Mammary epithelial cell (primary cell): ENCODE measurements at regions of chr17 and their contacts with region 1.

Region 1: GRCh38 chr17:2592971-2593820 is at the start of gene PAFAH1B1:
- DNase-seq: peak; percentile 90
- H3K4me3 ChIP-seq: peak within 1 kb of the TSS; percentile 68 to 91 (median 86)
- H3K27ac ChIP-seq: peak within 1 kb of the TSS; percentile 91
- H3K4me1 ChIP-seq: peaks cover 5% of the 10 kb centered on the region
- H3K27me3 ChIP-seq: no peaks in the 10 kb centered on the region
- CTCF ChIP-seq: peak in 1 of 2 donors; percentile 8
- total RNA-seq, gene PAFAH1B1: 87.0 to 191 TPM

Region 2: GRCh38 chr17:2484876-2485275 is 108.3 kb before region 1 on chr17:
- CTCF ChIA-PET with region 1: interaction called, 3 read pairs
- dilution Hi-C with region 1: no loop called
- in situ Hi-C with region 1: no loop called
- intact Hi-C with region 1: loop called (anchors 10 kb)
- DNase-seq: peak; percentile 85
- H3K4me3 ChIP-seq: peak overlapping the region; percentile 13 to 35 (median 30)
- H3K27ac ChIP-seq: peak overlapping the region; percentile 43
- H3K4me1 ChIP-seq: peaks cover 20% of the 10 kb centered on the region
- H3K27me3 ChIP-seq: no peaks in the 10 kb centered on the region
- CTCF ChIP-seq: peak in 1 of 2 donors; percentile 10

Region 3: GRCh38 chr17:2511462-2512369 is 81.5 kb before region 1 on chr17 and contains the start of gene METTL16:
- CTCF ChIA-PET with region 1: no interaction called
- dilution Hi-C with region 1: no loop called
- in situ Hi-C with region 1: no loop called
- intact Hi-C with region 1: loop called (anchors 1 kb)
- DNase-seq: peak; percentile 98
- H3K4me3 ChIP-seq: peak within 1 kb of the TSS; percentile 78 to 94 (median 82)
- H3K27ac ChIP-seq: peak within 1 kb of the TSS; percentile 96
- H3K4me1 ChIP-seq: peaks cover 9% of the 10 kb centered on the region
- H3K27me3 ChIP-seq: no peaks in the 10 kb centered on the region
- CTCF ChIP-seq: no peak
- total RNA-seq, gene METTL16: 15.2 to 28.0 TPM

Region 4: DNA sequence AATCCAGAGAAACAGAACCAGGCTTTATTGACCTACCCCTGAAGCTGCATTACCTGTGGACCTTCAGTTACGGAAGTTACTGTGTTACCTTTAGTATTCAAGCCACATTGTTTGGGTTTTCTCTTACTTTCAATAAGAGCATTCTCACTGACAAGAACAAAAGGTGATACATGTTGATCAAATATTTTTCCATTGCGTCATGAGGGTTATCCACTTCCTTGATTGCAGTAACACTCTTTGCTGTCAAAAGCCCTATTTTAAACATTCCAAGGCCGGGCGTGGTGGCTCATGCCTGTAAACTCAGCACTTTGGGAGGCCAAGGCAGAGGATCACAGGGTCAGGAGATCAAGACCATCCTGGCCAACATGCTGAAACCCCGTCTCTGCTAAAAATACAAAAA is 28.3 kb before region 1 on chr17:
- CTCF ChIA-PET with region 1: no interaction called
- dilution Hi-C with region 1: no loop called
- in situ Hi-C with region 1: no loop called
- intact Hi-C with region 1: loop called (anchors 2 kb)
- DNase-seq: peak; percentile 82
- H3K4me3 ChIP-seq: no peak overlapping the region
- H3K27ac ChIP-seq: peak overlapping the region; percentile 80
- H3K4me1 ChIP-seq: peaks cover 27% of the 10 kb centered on the region
- H3K27me3 ChIP-seq: no peaks in the 10 kb centered on the region
- CTCF ChIP-seq: no peak

Region 5: GRCh38 chr17:2634361-2634960 is 41.3 kb after region 1 on chr17:
- CTCF ChIA-PET with region 1: no interaction called
- dilution Hi-C with region 1: loop called (anchors 5 kb)
- in situ Hi-C with region 1: no loop called
- intact Hi-C with region 1: loop called (anchors 5 kb)
- DNase-seq: peak; percentile 83
- H3K4me3 ChIP-seq: no peak overlapping the region
- H3K27ac ChIP-seq: no peak overlapping the region
- H3K4me1 ChIP-seq: peaks cover 32% of the 10 kb centered on the region
- H3K27me3 ChIP-seq: no peaks in the 10 kb centered on the region
- CTCF ChIP-seq: no peak

Region 6: GRCh38 chr17:2656283-2656682 is 63.1 kb after region 1 on chr17:
- CTCF ChIA-PET with region 1: no interaction called
- dilution Hi-C with region 1: no loop called
- in situ Hi-C with region 1: no loop called
- intact Hi-C with region 1: loop called (anchors 5 kb)
- DNase-seq: no peak
- H3K4me3 ChIP-seq: no peak overlapping the region
- H3K27ac ChIP-seq: no peak overlapping the region
- H3K4me1 ChIP-seq: peaks cover 4% of the 10 kb centered on the region
- H3K27me3 ChIP-seq: no peaks in the 10 kb centered on the region
- CTCF ChIP-seq: no peak

Region 7: GRCh38 chr17:2683912-2684311 is 90.7 kb after region 1 on chr17:
- CTCF ChIA-PET with region 1: no interaction called
- dilution Hi-C with region 1: no loop called
- in situ Hi-C with region 1: no loop called
- intact Hi-C with region 1: loop called (anchors 5 kb)
- DNase-seq: no peak
- H3K4me3 ChIP-seq: no peak overlapping the region
- H3K27ac ChIP-seq: no peak overlapping the region
- H3K4me1 ChIP-seq: no peaks in the 10 kb centered on the region
- H3K27me3 ChIP-seq: no peaks in the 10 kb centered on the region
- CTCF ChIP-seq: no peak

Region 8: DNA sequence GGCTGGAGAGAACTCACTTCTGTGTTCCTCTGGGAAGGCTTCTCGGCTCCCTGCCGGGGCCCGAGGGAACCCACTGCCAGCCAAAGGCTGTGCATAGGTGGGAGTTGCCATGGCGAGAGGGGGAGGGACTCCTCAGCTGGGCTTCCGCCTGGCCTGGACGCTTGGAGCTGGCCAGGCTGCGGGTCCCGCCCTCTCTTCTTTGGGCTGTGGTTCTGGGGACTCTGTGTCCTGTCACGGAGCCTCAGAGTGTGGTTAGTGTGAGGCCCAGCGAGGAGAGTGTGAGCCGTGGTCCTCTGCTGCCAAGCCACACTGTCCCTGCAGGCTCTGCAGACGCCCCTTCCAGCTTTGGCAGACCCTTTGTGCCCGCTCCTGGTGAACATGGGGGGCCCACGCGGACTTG is 347.2 kb after region 1 on chr17:
- CTCF ChIA-PET with region 1: no interaction called
- dilution Hi-C with region 1: no loop called
- in situ Hi-C with region 1: no loop called
- intact Hi-C with region 1: no loop called
- DNase-seq: no peak
- H3K4me3 ChIP-seq: no peak overlapping the region
- H3K27ac ChIP-seq: no peak overlapping the region
- H3K4me1 ChIP-seq: peaks cover 4% of the 10 kb centered on the region
- H3K27me3 ChIP-seq: no peaks in the 10 kb centered on the region
- CTCF ChIP-seq: no peak